ENCODE measurements at regions of chr3 and their contacts with region 1.

Region 1: DNA sequence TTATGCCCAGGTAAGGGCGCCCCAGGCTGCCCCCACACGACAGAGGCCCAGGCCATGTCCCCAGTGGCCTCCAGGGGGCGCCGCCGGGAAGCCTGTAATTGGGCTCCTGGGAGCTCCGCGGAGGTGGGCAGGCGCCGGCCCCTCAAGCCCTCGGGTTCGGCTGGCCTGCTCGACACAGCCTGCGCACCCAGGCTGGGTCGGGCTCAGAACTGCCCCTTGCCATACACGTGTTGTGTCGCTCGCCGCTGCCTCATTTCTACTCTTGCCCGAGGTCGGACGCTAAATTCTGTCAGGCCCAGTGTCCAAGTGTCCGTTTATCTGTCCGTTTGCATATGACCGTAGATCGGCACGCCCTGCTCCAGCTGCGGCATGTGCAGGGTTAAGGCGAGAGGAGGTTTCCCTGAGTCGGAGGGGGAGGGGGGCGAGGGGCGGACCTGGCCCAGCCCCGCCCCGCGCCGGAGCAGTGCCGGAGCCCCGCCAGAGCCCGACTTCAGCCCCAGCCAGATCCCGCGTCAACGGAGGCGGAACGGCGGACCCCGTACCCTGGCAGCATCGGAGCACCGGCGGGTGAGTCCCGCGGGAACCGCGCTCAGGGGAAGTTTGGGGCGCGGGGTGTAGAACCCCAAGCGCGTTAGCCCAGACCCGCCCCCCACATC is at the start of gene KLHDC8B:
- DNase-seq: peak; percentile 92 to 96
- ATAC-seq: peak; percentile 92
- H3K4me3 ChIP-seq: peak within 1 kb of the TSS; percentile 38 to 75
- H3K27ac ChIP-seq: peak within 1 kb of the TSS; percentile 14 to 29
- H3K4me1 ChIP-seq: peaks cover 0 to 4% of the 10 kb centered on the region in 2 donors
- H3K27me3 ChIP-seq: no peaks in the 10 kb centered on the region
- total RNA-seq, gene KLHDC8B: 27.0 to 40.2 TPM

Region 2: DNA sequence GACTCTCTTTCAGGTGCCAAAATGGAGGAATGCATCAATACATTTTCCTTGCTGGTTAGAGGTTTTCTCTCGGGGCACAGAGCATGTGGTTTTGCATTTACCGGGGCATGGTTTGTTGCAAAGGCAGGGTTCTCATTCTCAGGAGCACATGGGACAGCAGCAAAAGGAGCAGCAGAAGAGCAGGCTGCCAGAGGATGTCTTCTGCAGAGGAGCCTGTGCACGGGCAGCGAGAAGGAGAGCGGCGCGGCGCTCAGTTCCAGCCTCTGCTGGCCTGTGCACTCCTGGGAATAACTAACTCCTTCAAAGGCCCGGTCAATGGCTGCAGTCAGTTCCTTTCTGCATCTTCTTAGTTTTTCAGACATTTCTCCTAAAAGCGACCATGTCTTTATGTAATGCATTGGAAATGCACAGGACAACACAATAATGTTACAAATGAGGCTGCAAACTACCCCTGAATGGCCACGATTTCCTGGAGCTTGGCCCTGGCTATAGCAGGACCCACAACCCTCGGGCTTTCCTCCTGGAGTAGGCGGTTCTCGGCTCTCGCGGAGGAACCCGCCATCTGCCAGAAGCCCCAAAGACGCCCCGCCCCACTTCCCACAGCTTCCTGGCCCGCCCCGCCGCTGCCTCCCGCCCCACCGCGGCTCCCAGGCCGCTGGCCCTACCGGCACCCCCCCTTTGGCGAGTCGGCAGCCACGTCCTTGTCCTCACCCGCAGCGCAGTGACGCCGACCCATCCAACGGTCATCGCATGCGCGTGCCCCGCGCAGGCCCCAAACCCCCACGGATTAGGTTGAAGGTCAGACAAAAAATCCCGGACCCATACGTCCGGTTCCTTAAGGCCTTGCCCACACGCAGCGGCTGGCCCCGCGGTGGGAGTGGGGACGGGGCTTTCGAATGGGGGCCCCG is 105.5 kb after region 1 on chr3 and contains the start of gene C3orf62:
- intact Hi-C with region 1: loop called in 1 of 2 experiments (anchors 2 kb)
- DNase-seq: peak; percentile 96 to 97
- ATAC-seq: peak; percentile 97
- H3K4me3 ChIP-seq: peak within 1 kb of the TSS; percentile 10 to 51
- H3K27ac ChIP-seq: peak within 1 kb of the TSS; percentile 84 to 86
- H3K4me1 ChIP-seq: no peaks in the 10 kb centered on the region
- H3K27me3 ChIP-seq: no peaks in the 10 kb centered on the region
- total RNA-seq, gene C3orf62: 4.3 to 5.9 TPM

Region 3: DNA sequence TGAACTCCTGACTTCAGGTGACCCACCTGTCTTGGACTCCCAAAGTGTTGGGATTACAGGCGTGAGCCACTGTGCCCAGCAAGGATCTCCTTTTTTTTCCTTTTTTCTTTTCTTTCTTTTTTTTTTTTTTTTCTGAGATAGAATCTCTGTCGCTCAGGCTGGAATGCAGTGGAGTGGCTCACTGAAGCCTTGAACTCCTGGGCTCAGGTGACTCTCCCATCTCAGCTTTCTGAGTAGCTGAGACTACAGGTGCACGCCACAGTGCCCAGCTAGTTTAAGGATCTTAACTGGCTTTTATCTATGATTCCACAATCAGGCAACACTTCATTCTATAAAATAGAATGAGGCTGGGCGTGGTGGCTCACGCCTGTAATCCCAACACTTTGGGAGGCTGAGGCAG is 274.1 kb after region 1 on chr3:
- intact Hi-C with region 1: loop called (anchors 2 to 10 kb)
- DNase-seq: no peak
- ATAC-seq: no peak
- H3K4me3 ChIP-seq: no peak overlapping the region
- H3K27ac ChIP-seq: no peak overlapping the region
- H3K4me1 ChIP-seq: no peaks in the 10 kb centered on the region
- H3K27me3 ChIP-seq: no peaks in the 10 kb centered on the region

Region 4: GRCh38 chr3:49454458-49454857 is 283.2 kb after region 1 on chr3:
- intact Hi-C with region 1: loop called (anchors 2 to 10 kb)
- DNase-seq: no peak
- ATAC-seq: peak; percentile 54
- H3K4me3 ChIP-seq: no peak overlapping the region
- H3K27ac ChIP-seq: peak overlapping the region in 1 of 2 donors; percentile 12
- H3K4me1 ChIP-seq: no peaks in the 10 kb centered on the region
- H3K27me3 ChIP-seq: no peaks in the 10 kb centered on the region

Measured in aorta (tissue), 5 donors.